CD8-positive, alpha-beta T cell (primary cell): ENCODE measurements at regions of chr11 and their contacts with region 1.

Region 1: GRCh38 chr11:122832721-122833470 is 5.4 kb upstream of the CRTAM start:
- DNase-seq: peak in 1 of 9 experiments; percentile 44
- ATAC-seq: peak; percentile 46
- H3K4me3 ChIP-seq: no peak overlapping the region
- H3K4me3 Mint-ChIP-seq: peak overlapping the region; percentile 12
- H3K27ac ChIP-seq: peak overlapping the region; percentile 7 to 42
- H3K27ac Mint-ChIP-seq: peak overlapping the region; percentile 70
- H3K4me1 ChIP-seq: peaks cover 15% of the 10 kb centered on the region
- H3K4me1 Mint-ChIP-seq: peaks cover 43% of the 10 kb centered on the region
- H3K27me3 ChIP-seq: no peaks in the 10 kb centered on the region
- H3K27me3 Mint-ChIP-seq: no peaks in the 10 kb centered on the region
- CTCF ChIP-seq: no peak

Region 2: GRCh38 chr11:122814401-122814800 is 18.5 kb before region 1 on chr11:
- CTCF ChIA-PET with region 1: interaction called, 22 read pairs
- POLR2A ChIA-PET with region 1: interaction called, 3 read pairs
- intact Hi-C with region 1: no loop called
- DNase-seq: peak in 3 of 9 experiments; percentile 10 to 57 (median 44)
- ATAC-seq: no peak
- H3K4me3 ChIP-seq: no peak overlapping the region
- H3K4me3 Mint-ChIP-seq: no peak overlapping the region
- H3K27ac ChIP-seq: no peak overlapping the region
- H3K27ac Mint-ChIP-seq: no peak overlapping the region
- H3K4me1 ChIP-seq: peaks cover 27% of the 10 kb centered on the region
- H3K4me1 Mint-ChIP-seq: peaks cover 49% of the 10 kb centered on the region
- H3K27me3 ChIP-seq: no peaks in the 10 kb centered on the region
- H3K27me3 Mint-ChIP-seq: no peaks in the 10 kb centered on the region
- CTCF ChIP-seq: peak; percentile 25

Region 3: DNA sequence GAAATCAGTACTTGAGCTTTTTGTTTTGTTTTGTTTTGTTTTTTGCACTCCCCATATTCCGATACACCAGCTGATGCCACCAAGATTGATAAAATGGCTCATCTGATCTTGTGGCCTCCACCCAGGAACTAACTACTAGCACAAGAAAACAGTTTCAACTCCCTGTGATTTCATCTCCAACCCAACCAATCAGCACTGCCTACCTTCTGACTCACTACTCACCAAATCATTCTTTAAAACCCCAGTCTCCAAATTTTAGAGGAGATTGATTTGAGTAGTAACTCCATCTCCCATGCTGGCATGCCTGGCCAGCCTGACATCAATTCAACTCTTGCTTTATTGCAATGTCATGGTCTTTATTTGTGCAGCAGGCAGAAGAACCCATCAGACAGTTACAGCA is 10.7 kb before region 1 on chr11:
- CTCF ChIA-PET with region 1: interaction called, 22 read pairs
- POLR2A ChIA-PET with region 1: interaction called, 15 read pairs
- intact Hi-C with region 1: no loop called
- DNase-seq: no peak
- ATAC-seq: no peak
- H3K4me3 ChIP-seq: no peak overlapping the region
- H3K4me3 Mint-ChIP-seq: no peak overlapping the region
- H3K27ac ChIP-seq: no peak overlapping the region
- H3K27ac Mint-ChIP-seq: no peak overlapping the region
- H3K4me1 ChIP-seq: peaks cover 11% of the 10 kb centered on the region
- H3K4me1 Mint-ChIP-seq: peaks cover 18% of the 10 kb centered on the region
- H3K27me3 ChIP-seq: no peaks in the 10 kb centered on the region
- H3K27me3 Mint-ChIP-seq: no peaks in the 10 kb centered on the region
- CTCF ChIP-seq: no peak

Region 4: GRCh38 chr11:123511037-123511870 is 678.4 kb after region 1 on chr11:
- CTCF ChIA-PET with region 1: no interaction called
- POLR2A ChIA-PET with region 1: no interaction called
- intact Hi-C with region 1: no loop called
- DNase-seq: peak; percentile 20 to 78 (median 56)
- ATAC-seq: peak; percentile 87
- H3K4me3 ChIP-seq: no peak overlapping the region
- H3K4me3 Mint-ChIP-seq: no peak overlapping the region
- H3K27ac ChIP-seq: no peak overlapping the region
- H3K27ac Mint-ChIP-seq: no peak overlapping the region
- H3K4me1 ChIP-seq: no peaks in the 10 kb centered on the region
- H3K4me1 Mint-ChIP-seq: peaks cover 6% of the 10 kb centered on the region
- H3K27me3 ChIP-seq: no peaks in the 10 kb centered on the region
- H3K27me3 Mint-ChIP-seq: no peaks in the 10 kb centered on the region
- CTCF ChIP-seq: peak; percentile 86